CD4-positive, alpha-beta T cell (primary cell): ENCODE measurements at regions of chr4 and their contacts with region 1.

Region 1: GRCh38 chr4:17997129-17997528 is 24.4 kb downstream of the LCORL start:
- DNase-seq: no peak
- ATAC-seq: no peak
- H3K4me3 ChIP-seq: no peak overlapping the region
- H3K4me3 Mint-ChIP-seq: no peak overlapping the region
- H3K27ac ChIP-seq: no peak overlapping the region
- H3K27ac Mint-ChIP-seq: no peak overlapping the region
- H3K4me1 ChIP-seq: no peaks in the 10 kb centered on the region
- H3K4me1 Mint-ChIP-seq: peaks cover 10% of the 10 kb centered on the region
- H3K27me3 ChIP-seq: no peaks in the 10 kb centered on the region
- H3K27me3 Mint-ChIP-seq: no peaks in the 10 kb centered on the region
- CTCF ChIP-seq: no peak

Region 2: DNA sequence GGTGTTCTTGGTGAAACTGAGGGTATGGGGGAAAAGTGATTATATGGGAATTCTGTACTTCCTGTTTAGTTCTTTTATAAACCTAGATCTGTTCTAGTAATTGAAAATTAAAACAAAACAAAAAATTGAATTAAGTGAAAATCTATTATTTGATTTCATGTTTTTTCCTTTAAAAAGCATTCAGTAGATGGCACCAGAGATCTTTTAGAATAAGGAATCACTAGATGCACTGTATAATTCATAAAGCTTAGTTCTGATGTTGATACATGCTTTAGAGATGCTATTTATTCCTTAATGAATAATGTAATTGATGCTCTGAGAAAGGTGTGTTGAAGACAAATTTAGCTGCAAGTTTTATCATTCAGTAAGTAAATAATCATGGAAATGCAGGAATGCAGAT is 62.8 kb before region 1 on chr4:
- CTCF ChIA-PET with region 1: no interaction called
- POLR2A ChIA-PET with region 1: no interaction called
- intact Hi-C with region 1: no loop called
- DNase-seq: no peak
- ATAC-seq: no peak
- H3K4me3 ChIP-seq: no peak overlapping the region
- H3K4me3 Mint-ChIP-seq: no peak overlapping the region
- H3K27ac ChIP-seq: no peak overlapping the region
- H3K27ac Mint-ChIP-seq: no peak overlapping the region
- H3K4me1 ChIP-seq: no peaks in the 10 kb centered on the region
- H3K4me1 Mint-ChIP-seq: no peaks in the 10 kb centered on the region
- H3K27me3 ChIP-seq: no peaks in the 10 kb centered on the region
- H3K27me3 Mint-ChIP-seq: no peaks in the 10 kb centered on the region
- CTCF ChIP-seq: no peak

Region 3: DNA sequence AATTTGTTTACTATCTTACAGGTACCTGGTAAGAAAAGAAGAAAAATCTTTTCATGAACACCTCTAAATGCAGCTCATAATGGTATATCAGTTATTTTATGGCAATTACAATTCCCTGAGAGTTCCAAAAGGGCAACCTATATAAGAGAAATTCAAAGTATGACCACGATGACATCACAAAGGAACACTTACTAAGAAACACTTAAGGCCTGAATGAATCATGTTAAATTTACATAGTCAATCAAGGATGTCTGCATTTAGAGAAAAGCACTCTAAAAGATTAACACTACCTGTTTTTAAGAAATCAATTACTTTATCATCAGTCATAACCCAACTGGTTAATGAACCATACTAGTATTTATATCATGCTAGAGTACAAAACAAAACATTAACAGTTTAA is 39.4 kb before region 1 on chr4:
- CTCF ChIA-PET with region 1: no interaction called
- POLR2A ChIA-PET with region 1: no interaction called
- intact Hi-C with region 1: loop called in 1 of 2 experiments (anchors 5 kb)
- DNase-seq: no peak
- ATAC-seq: no peak
- H3K4me3 ChIP-seq: no peak overlapping the region
- H3K4me3 Mint-ChIP-seq: no peak overlapping the region
- H3K27ac ChIP-seq: no peak overlapping the region
- H3K27ac Mint-ChIP-seq: no peak overlapping the region
- H3K4me1 ChIP-seq: no peaks in the 10 kb centered on the region
- H3K4me1 Mint-ChIP-seq: no peaks in the 10 kb centered on the region
- H3K27me3 ChIP-seq: no peaks in the 10 kb centered on the region
- H3K27me3 Mint-ChIP-seq: no peaks in the 10 kb centered on the region
- CTCF ChIP-seq: no peak

Region 4: DNA sequence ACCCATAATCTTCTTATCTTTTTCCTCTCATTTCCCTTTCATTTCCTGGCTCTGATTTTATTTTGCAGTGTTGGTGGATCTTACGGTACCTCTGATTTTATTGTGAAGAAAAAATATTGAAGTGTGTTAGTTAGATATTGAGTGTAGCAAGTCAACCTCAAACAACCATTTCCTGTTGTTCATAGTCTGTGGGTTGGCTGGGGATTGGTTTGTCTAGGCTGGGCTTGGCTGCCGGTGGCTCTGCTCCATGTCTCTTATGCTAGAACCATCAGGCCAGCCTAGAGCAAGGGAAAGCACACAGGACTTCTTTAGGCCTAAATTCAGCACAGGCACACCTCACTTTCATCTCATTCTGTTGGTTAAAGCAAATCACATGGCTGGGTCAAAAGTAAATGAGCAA is 407.5 kb after region 1 on chr4:
- CTCF ChIA-PET with region 1: no interaction called
- POLR2A ChIA-PET with region 1: no interaction called
- intact Hi-C with region 1: no loop called
- DNase-seq: no peak
- ATAC-seq: no peak
- H3K4me3 ChIP-seq: no peak overlapping the region
- H3K4me3 Mint-ChIP-seq: no peak overlapping the region
- H3K27ac ChIP-seq: no peak overlapping the region
- H3K27ac Mint-ChIP-seq: no peak overlapping the region
- H3K4me1 ChIP-seq: no peaks in the 10 kb centered on the region
- H3K4me1 Mint-ChIP-seq: no peaks in the 10 kb centered on the region
- H3K27me3 ChIP-seq: no peaks in the 10 kb centered on the region
- H3K27me3 Mint-ChIP-seq: peaks cover 5% of the 10 kb centered on the region
- CTCF ChIP-seq: no peak

Region 5: DNA sequence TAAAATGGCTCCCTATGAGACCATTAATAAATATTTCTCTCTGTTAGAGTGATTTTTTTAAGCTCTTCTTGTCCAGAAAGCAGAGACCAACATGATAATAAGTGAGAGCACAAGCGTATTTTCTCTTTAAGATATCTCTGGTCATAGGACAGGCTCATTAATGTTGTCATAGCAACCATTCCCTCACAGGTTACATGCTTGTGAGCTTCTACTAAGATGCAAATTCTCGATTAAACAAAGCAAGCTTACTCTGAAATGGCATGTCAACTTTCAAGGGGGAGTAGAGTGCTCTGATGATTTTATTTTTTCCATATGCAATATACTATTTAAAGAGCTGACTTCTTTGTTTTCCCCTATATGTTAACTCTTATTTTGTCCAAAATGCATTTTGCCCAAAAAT is 511.7 kb after region 1 on chr4:
- CTCF ChIA-PET with region 1: no interaction called
- POLR2A ChIA-PET with region 1: no interaction called
- intact Hi-C with region 1: no loop called
- DNase-seq: no peak
- ATAC-seq: no peak
- H3K4me3 ChIP-seq: no peak overlapping the region
- H3K4me3 Mint-ChIP-seq: no peak overlapping the region
- H3K27ac ChIP-seq: no peak overlapping the region
- H3K27ac Mint-ChIP-seq: no peak overlapping the region
- H3K4me1 ChIP-seq: no peaks in the 10 kb centered on the region
- H3K4me1 Mint-ChIP-seq: no peaks in the 10 kb centered on the region
- H3K27me3 ChIP-seq: no peaks in the 10 kb centered on the region
- H3K27me3 Mint-ChIP-seq: no peaks in the 10 kb centered on the region
- CTCF ChIP-seq: no peak